Mammary epithelial cell (primary cell): ENCODE measurements at regions of chr15 and their contacts with region 1.

Region 1: GRCh38 chr15:82985688-82986441 is at the start of gene RAMAC:
- DNase-seq: peak; percentile 93
- H3K4me3 ChIP-seq: peak within 1 kb of the TSS; percentile 71 to 76 (median 73)
- H3K27ac ChIP-seq: peak within 1 kb of the TSS; percentile 72
- H3K4me1 ChIP-seq: peaks cover 6% of the 10 kb centered on the region
- H3K27me3 ChIP-seq: no peaks in the 10 kb centered on the region
- CTCF ChIP-seq: no peak
- total RNA-seq, gene RAMAC: 22.1 to 30.5 TPM

Region 2: GRCh38 chr15:82540055-82540983 is 445.5 kb before region 1 on chr15 and contains the start of gene RPS17:
- CTCF ChIA-PET with region 1: no interaction called
- dilution Hi-C with region 1: no loop called
- in situ Hi-C with region 1: no loop called
- intact Hi-C with region 1: loop called (anchors 5 kb)
- DNase-seq: peak; percentile 96
- H3K4me3 ChIP-seq: peak within 1 kb of the TSS; percentile 83 to 92 (median 92)
- H3K27ac ChIP-seq: peak within 1 kb of the TSS; percentile 73
- H3K4me1 ChIP-seq: peaks cover 21% of the 10 kb centered on the region
- H3K27me3 ChIP-seq: no peaks in the 10 kb centered on the region
- CTCF ChIP-seq: peak; percentile 78 to 98
- total RNA-seq, gene RPS17: 1,069 to 1,616 TPM

Region 3: GRCh38 chr15:82849556-82850512 is 136.0 kb before region 1 on chr15:
- CTCF ChIA-PET with region 1: no interaction called
- dilution Hi-C with region 1: no loop called
- in situ Hi-C with region 1: loop called in 1 of 2 experiments (anchors 5 kb)
- intact Hi-C with region 1: loop called (anchors 1 kb)
- DNase-seq: peak; percentile 42
- H3K4me3 ChIP-seq: no peak overlapping the region
- H3K27ac ChIP-seq: no peak overlapping the region
- H3K4me1 ChIP-seq: peaks cover under 1% of the 10 kb centered on the region
- H3K27me3 ChIP-seq: no peaks in the 10 kb centered on the region
- CTCF ChIP-seq: peak; percentile 50 to 66

Region 4: DNA sequence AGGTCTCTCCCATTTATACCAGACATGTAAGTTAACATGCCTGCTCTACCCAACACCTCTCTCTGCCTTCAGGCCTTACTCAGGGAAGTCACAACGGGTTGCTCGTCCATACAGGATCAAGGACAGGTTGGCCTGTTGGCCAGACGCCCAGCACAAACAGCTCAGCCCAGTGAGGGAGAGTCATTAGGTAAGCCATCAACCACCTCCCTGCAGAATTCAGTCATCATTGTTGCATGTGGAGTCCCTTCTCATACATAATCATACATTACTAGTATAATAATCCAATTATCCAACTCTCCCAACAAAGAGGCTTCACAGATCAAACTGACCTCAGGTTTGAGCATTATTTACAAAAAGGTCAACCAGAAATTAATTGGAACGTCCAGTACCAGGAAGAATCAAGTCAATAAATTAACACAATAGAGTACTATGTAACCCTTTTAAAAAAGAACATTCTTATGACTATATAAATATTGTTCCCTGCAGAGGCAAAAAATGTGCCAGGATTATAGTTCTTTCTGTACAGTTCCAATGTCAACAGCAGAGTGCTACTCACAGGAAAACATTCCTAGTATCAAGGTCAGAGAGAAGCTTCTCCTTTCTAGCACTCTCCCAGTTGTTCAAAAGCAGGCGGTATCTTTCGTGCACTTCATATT is 66.5 kb before region 1 on chr15:
- CTCF ChIA-PET with region 1: no interaction called
- dilution Hi-C with region 1: no loop called
- in situ Hi-C with region 1: no loop called
- intact Hi-C with region 1: no loop called
- DNase-seq: peak; percentile 81
- H3K4me3 ChIP-seq: no peak overlapping the region
- H3K27ac ChIP-seq: no peak overlapping the region
- H3K4me1 ChIP-seq: peaks cover 8% of the 10 kb centered on the region
- H3K27me3 ChIP-seq: no peaks in the 10 kb centered on the region
- CTCF ChIP-seq: no peak

Region 5: GRCh38 chr15:82942617-82943078 is 43.2 kb before region 1 on chr15:
- CTCF ChIA-PET with region 1: no interaction called
- dilution Hi-C with region 1: no loop called
- in situ Hi-C with region 1: loop called in 1 of 2 experiments (anchors 5 kb)
- intact Hi-C with region 1: no loop called
- DNase-seq: peak; percentile 99
- H3K4me3 ChIP-seq: no peak overlapping the region
- H3K27ac ChIP-seq: no peak overlapping the region
- H3K4me1 ChIP-seq: peaks cover 17% of the 10 kb centered on the region
- H3K27me3 ChIP-seq: no peaks in the 10 kb centered on the region
- CTCF ChIP-seq: no peak

Region 6: GRCh38 chr15:82952158-82953081 is 33.4 kb before region 1 on chr15 and contains the start of gene HOMER2:
- CTCF ChIA-PET with region 1: no interaction called
- dilution Hi-C with region 1: loop called (anchors 5 kb)
- in situ Hi-C with region 1: no loop called
- intact Hi-C with region 1: loop called (anchors 5 kb)
- DNase-seq: peak; percentile 29
- H3K4me3 ChIP-seq: peak within 1 kb of the TSS; percentile 53 to 76 (median 66)
- H3K27ac ChIP-seq: no peak within 1 kb of the TSS
- H3K4me1 ChIP-seq: peaks cover 5% of the 10 kb centered on the region
- H3K27me3 ChIP-seq: peaks cover 4% of the 10 kb centered on the region
- CTCF ChIP-seq: no peak
- total RNA-seq, gene HOMER2: 22.9 to 30.0 TPM